Common myeloid progenitor, CD34-positive (primary cell): ENCODE measurements at regions of chr4 and their contacts with region 1.

Region 1: DNA sequence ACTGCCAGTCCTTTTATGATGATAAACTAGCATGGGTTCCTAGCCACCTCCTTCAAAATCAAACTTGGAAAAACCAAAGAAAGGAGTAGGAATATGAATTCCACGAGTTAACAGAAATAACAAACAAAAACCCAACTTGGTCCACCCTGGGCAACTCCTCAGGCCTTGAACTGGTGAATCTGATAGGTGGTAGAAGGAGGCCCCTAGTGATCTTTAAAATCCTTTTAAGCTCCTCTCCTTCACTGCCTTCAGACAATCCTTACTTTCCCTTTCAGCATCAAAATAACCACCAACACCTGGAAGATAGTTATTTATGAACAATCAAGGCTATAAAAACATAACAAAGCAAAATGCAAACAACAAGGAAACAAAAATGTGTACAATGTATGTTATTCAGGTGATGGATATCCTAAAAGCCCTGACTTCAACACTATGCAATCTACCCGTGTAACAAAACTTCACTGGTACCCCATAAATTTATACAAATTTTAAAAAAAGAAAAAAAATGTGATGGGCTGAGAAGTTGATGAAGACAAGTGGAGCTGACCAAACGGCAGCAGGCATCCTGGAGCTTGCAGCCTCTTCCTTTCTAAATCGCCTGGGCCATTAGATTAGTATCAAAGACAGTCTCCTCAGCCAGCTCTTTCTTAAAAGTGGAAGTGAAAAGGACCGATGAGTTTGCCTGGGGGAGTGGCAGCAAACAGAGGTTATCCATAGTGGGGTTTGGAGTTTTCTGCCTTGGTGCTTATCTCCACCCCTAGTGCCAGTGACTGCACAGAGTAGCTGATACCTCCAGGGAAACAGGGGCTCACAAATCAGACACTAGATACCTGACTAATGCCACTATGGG is 179.6 kb downstream of the TMA16 start:
- DNase-seq: peak in 2 of 3 donors; percentile 65 to 78
- H3K4me3 ChIP-seq: peak overlapping the region in 2 of 7 experiments; percentile 24 to 48
- H3K27ac ChIP-seq: peak overlapping the region in 1 of 2 experiments; percentile 14
- H3K4me1 ChIP-seq: peaks cover 0 to 19% (median 6%) of the 10 kb centered on the region in 4 experiments
- H3K27me3 ChIP-seq: no peaks in the 10 kb centered on the region

Region 2: DNA sequence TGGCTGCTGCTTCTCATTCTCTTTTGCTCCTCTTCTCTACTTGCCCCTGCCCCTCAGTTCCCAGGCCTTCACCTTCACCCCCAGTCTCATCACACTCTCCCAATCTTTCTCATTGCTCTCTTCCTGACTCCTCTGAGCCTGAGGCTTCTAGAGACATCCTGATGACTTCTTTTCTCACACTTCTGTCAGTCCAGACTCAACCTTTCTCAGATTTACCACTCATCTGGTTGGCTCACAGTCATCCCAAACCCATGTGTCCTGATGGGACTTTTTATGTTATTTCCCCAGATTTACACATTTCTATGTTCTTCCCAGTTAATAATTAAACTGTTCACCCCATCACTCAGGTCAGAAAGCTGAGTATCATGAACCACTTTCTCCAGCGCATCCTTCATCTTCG is 111.6 kb before region 1 on chr4:
- CTCF ChIA-PET with region 1: interaction called, 150 read pairs
- POLR2A ChIA-PET with region 1: no interaction called
- DNase-seq: no peak
- H3K4me3 ChIP-seq: no peak overlapping the region
- H3K27ac ChIP-seq: no peak overlapping the region
- H3K4me1 ChIP-seq: peaks cover 6 to 23% (median 16%) of the 10 kb centered on the region in 4 experiments
- H3K27me3 ChIP-seq: no peaks in the 10 kb centered on the region

Region 3: DNA sequence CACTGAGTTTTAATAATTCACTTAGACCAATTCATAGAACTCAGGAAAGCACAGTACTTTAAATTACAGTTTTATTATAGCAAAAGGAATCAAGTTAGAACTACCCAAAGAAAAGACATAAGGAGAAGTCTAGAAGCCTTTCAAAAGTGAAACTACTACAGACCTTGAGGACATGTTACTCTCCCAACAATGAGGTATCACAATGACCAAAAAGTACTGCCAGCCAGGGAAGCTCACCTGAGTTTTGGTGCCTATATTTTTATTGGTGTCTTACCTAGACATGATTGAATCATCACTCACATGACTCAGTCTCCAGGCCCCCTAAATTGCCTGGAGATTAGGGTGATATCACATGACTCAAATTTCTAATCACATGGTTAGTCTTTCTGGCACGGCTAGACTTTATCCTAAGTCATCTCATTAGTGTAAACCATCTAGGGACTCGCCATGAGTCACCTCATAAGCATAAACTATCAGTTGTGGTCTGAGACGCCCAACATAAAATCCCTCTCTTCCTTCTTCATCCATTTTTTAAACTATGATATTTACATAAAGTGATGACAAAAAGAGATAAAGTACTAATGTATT is 192.7 kb after region 1 on chr4:
- CTCF ChIA-PET with region 1: no interaction called
- POLR2A ChIA-PET with region 1: no interaction called
- DNase-seq: no peak
- H3K4me3 ChIP-seq: no peak overlapping the region
- H3K27ac ChIP-seq: no peak overlapping the region
- H3K4me1 ChIP-seq: no peaks in the 10 kb centered on the region
- H3K27me3 ChIP-seq: no peaks in the 10 kb centered on the region